Left cardiac atrium (tissue), 4 donors: ENCODE measurements at regions of chr1 and their contacts with region 1.

Region 1: GRCh38 chr1:177937931-177938330 is 31.9 kb downstream of the SEC16B start:
- DNase-seq: no peak
- ATAC-seq: no peak

Region 2: DNA sequence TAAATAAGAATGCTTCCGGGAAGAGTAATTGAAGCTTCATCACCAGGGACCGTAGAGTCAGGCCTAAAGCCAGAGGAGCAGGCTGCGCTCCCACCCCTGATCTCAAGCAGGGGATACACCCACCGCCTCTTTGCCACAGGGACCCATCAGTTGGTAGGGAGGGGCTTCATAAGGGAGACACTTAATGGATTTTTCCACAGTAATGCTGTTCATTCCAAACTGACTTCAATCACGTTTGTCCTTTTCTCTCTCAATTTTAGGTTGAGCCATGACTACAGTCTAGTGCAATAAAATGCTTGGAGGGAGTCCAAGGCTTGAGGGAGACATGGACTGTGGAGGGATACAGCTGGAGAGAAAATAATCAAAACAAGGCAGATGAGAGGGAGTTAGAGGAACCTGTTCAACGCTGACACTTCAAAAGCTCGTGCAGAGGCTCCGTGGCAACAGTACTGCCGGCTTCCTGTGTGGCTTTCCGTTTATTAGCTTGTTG is 79.6 kb before region 1 on chr1:
- intact Hi-C with region 1: loop called in 1 of 2 experiments (anchors 5 kb)
- DNase-seq: no peak
- ATAC-seq: peak in 1 of 2 donors; percentile 65

Region 3: DNA sequence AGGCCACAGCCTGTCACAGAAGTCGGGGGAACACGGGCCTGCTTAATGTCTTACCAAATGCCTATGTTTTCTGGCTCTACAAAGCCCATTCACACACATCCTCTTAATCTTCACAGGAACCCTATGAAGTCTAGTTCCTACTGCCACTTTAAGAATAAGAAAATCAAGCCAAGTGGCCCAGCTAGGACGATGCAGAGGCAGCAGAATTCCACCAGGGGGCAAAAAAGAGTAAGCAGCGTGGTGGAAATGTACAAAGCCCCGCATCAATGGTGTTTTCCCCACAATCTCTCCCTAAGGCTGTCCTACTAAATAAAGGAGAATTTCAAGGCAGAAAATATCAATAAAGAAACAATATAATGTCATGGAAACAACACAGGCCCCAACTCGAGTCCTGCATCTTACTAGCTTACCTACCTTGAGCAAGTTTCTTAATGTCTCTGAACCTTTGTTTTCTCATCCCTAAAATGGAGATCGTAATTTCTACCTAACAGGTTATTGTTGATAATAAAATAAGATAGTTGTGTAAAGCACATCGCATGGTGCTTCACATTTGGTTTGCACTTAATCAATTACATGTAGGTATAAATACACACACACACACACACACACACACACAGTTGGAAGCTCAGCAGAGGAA is 10.5 kb after region 1 on chr1:
- intact Hi-C with region 1: no loop called
- DNase-seq: peak; percentile 40
- ATAC-seq: peak; percentile 52 to 64

Region 4: DNA sequence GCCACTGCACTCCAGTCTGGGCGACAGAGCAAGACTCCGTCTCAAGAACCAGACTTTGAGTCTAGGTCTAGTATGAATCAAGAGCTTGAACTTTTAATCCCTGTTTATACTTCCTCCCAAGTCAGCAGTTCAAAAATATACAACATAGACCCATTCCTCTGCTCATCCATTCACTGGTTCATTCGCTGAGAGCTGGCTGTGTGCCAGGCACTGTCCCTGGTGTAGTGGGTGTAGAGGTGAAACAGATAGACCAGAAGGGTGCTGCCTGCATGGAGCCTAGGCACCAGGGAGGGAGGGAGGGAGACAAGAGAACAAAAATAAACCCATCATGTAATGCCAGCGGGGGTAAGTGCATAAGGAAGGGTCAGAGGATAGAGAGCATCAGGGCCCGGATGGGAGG is 57.4 kb after region 1 on chr1:
- intact Hi-C with region 1: no loop called
- DNase-seq: no peak
- ATAC-seq: no peak